Gastrocnemius medialis (tissue), 4 donors: ENCODE measurements at regions of chr11 and their contacts with region 1.

Region 1: GRCh38 chr11:62556108-62556871 is 9.7 kb upstream of the AHNAK start:
- DNase-seq: peak; percentile 89 to 94
- ATAC-seq: peak; percentile 40 to 42
- H3K4me3 ChIP-seq: peak overlapping the region in 2 of 4 donors; percentile 8 to 23
- H3K27ac ChIP-seq: peak overlapping the region; percentile 97 to 100 (median 100)
- H3K4me1 ChIP-seq: peaks cover 86 to 90% of the 10 kb centered on the region in 2 donors
- H3K27me3 ChIP-seq: no peaks in the 10 kb centered on the region
- CTCF ChIP-seq: no peak
- POLR2A ChIP-seq: peak in 1 of 2 donors; percentile 35

Region 2: DNA sequence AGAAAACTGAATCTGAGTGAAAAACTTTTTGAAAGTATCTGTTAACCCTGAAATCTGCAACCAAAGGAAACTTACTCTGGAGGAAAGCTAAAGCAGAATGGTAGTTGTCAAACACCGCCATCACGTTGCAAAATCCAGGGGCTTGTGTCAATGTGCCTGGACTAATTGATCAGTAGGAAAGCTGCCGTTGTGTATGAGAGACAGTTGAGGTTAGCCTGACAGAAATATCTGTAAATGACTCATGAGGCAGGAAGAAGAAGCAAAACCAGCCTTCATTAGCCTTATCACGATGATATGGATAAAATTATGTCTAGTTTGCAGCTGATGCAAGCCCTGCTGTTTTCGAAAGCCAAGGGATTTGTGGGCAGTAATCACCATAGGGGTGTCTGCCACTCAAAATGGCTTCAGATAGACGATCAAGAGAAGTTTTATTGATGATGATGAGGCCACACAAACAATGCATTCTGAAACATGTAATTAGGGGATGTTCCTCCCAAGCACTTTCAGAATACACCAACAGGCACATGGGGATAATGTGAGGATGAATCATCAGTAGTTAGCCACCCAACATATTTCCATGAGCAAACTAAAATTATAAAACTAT is 128.6 kb before region 1 on chr11:
- in situ Hi-C with region 1: loop called in 3 of 4 experiments (anchors 10 kb)
- intact Hi-C with region 1: loop called (anchors 1 kb)
- DNase-seq: no peak
- ATAC-seq: no peak
- H3K4me3 ChIP-seq: no peak overlapping the region
- H3K27ac ChIP-seq: peak overlapping the region in 1 of 4 donors; percentile 5
- H3K4me1 ChIP-seq: no peaks in the 10 kb centered on the region
- H3K27me3 ChIP-seq: no peaks in the 10 kb centered on the region
- CTCF ChIP-seq: no peak
- POLR2A ChIP-seq: no peak

Region 3: DNA sequence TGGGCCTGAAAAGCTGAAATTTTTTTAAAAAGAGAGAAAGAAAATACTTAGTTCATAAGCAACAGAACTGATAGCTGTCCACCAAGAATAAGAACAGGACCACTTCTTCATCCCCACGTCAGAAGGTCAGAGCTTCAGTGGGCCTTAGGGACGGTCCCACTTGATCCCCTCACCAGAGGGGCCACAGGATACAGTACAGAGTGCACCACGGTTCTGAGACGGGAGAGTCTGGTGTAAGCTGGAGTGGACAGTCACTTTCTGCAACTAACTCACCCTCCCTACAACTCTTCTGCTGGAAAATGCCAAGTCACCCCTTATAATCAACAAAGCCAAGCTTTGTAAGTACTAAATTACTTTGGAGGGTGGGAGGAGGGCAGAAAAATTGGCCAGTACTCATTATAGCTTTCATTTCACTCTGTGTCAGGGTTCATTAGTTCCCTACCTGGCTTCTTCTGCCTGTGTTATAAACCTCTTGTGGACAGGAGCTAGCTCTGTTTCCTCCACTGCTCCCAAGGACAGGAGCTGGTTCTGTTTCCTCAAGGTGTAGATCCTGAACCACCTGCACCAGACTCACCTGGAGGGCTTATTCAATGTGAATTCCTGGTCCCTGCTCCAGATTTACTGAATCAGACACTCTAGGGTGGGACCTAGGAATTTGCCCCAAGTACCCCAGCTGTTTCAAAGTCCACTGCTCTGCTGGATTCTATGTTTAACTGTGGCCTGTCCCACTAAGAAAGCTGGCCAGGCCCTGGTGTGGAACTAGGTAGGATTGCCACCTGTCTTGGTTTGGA is 97.9 kb before region 1 on chr11:
- in situ Hi-C with region 1: no loop called
- intact Hi-C with region 1: no loop called
- DNase-seq: no peak
- ATAC-seq: no peak
- H3K4me3 ChIP-seq: no peak overlapping the region
- H3K27ac ChIP-seq: no peak overlapping the region
- H3K4me1 ChIP-seq: no peaks in the 10 kb centered on the region
- H3K27me3 ChIP-seq: no peaks in the 10 kb centered on the region
- CTCF ChIP-seq: no peak
- POLR2A ChIP-seq: no peak

Region 4: DNA sequence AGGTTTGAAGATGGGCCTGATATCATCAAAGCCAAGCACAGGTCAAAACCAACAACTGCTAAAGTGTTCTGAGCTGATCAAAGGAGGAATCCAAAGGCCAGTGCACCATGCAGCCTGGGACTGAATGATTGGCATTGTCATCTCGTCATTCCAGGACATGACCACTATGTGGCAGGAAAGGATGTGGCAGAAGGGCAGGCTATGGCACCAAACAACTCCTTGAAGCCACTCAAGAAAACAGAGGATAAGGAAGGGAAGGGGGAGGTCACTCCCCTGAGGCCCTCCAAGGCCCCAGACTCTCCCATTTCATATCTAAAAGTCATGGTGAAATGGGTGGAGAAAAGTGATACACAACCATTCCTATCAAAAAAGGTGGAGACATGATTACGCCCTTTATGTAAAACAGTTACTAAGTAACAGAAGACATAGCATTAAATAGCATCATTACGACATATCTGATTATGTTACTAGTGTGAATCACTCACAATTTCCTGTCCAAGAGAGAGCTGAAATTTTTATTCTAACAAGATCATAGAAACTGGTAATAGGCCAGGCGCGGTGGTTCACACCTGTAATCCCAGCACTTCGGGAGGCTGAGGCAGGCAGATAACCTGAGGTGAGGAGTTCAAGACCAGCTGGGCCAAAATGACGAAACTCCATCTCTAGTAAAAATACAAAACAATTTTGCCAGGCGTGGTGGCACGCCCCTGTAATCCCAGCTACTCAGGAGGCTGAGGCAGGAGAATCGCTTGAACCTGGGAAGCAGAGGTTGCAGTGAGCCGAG is 59.0 kb before region 1 on chr11:
- in situ Hi-C with region 1: loop called in 2 of 4 experiments (anchors 5 to 10 kb)
- intact Hi-C with region 1: loop called (anchors 1 kb)
- DNase-seq: peak; percentile 35 to 69
- ATAC-seq: peak; percentile 84 to 90
- H3K4me3 ChIP-seq: no peak overlapping the region
- H3K27ac ChIP-seq: peak overlapping the region; percentile 67 to 83 (median 80)
- H3K4me1 ChIP-seq: peaks cover 33 to 54% of the 10 kb centered on the region in 2 donors
- H3K27me3 ChIP-seq: no peaks in the 10 kb centered on the region
- CTCF ChIP-seq: peak; percentile 55 to 69 (median 63)
- POLR2A ChIP-seq: no peak

Region 5: DNA sequence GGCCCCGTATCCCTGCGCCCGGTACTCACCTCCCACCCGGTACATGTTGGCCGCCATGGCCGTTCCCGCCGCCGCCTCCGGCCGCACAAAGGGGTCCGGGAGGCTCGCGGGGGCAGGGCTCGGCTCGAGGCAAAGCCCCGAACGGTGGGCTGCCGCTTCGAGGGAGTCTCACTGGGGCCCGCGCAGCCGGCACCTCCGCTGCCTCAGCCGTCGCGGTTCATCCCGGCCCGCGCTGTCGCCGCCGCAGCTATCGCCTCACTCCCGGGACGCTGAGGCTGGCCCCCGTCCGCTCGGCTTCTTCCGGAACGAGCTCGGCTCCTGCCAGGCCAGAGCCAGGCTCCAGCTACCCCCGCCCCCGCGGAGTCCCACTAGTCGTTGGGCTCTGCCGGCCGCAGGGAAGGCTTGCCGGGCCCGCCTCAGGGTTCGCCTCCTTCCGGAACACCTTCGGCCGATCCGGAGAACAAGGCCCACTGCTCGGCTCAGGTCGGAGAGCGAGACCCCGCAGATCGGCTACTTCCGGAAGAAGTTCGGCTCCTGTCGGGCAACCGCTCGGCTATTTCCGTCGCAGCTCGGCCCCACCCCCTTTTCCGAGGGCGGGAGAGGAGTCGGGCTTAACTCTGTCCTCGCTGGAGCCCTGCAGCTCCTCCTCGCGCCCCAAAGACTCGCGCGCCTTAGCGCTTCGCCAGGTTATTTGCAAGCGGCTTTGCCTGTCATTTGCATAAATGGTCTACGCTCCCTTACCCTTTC is 45.3 kb after region 1 on chr11 and contains the start of gene MTA2:
- in situ Hi-C with region 1: no loop called
- intact Hi-C with region 1: loop called (anchors 5 kb)
- DNase-seq: peak; percentile 97
- ATAC-seq: peak; percentile 83 to 85
- H3K4me3 ChIP-seq: peak within 1 kb of the TSS; percentile 84 to 99 (median 98)
- H3K27ac ChIP-seq: peak within 1 kb of the TSS; percentile 87 to 97 (median 94)
- H3K4me1 ChIP-seq: peaks cover 17 to 29% of the 10 kb centered on the region in 2 donors
- H3K27me3 ChIP-seq: no peaks in the 10 kb centered on the region
- CTCF ChIP-seq: no peak
- POLR2A ChIP-seq: peak; percentile 43 to 57
- total RNA-seq, gene MTA2: 28.0 to 47.1 (median 31.7) TPM